ENCODE measurements at regions of chr12 and their contacts with region 1.

Region 1: GRCh38 chr12:42589465-42590329 is at the start of gene PRICKLE1:
- DNase-seq: peak; percentile 67
- H3K4me3 ChIP-seq: peak within 1 kb of the TSS; percentile 87 to 94 (median 90)
- H3K27ac ChIP-seq: peak within 1 kb of the TSS; percentile 68 to 84 (median 77)
- H3K4me1 ChIP-seq: peaks cover 0 to 45% (median 41%) of the 10 kb centered on the region in 4 donors
- H3K27me3 ChIP-seq: no peaks in the 10 kb centered on the region
- CTCF ChIP-seq: no peak
- EP300 ChIP-seq: no peak
- POLR2A ChIP-seq: no peak
- total RNA-seq, gene PRICKLE1: 4.6 to 12.4 (median 10.0) TPM

Region 2: DNA sequence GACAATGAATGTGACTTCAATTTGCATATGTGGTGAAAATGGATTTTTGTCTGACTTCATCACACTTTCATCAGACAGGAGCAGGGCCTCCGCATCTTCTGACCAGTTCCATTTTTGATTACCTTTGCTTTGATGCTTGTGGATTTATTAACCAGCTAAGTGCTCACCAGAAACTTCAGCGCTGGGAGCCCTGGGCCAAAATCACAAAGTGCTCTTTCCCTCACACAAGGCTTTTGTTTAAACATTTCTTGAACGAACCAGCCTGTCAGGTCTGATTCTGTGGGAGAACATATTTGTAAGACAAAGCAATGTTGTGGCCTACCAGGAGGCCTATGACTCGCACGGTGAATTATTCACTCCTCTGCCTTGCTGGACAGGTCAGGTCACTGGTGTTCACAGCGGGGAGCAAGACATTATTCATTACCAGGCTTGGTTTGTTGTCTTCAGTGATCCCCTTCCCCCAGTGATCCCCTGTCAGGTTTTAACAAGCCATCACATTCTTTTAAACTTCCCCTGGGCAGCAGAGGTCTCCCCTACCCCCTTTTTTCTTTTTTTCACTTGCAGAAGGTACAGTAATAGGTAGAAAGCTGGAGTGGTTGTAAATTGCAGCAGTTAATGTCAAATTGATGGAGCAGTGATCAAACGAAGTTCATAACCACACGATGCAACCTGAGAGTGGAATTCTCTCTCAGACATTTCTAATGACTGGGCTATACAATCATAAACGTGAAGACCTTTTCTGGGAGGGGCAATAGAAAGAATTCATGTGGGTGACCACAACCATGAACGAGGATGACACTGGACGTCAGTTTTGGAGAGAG is 167.4 kb after region 1 on chr12:
- intact Hi-C with region 1: no loop called
- DNase-seq: no peak
- H3K4me3 ChIP-seq: no peak overlapping the region
- H3K27ac ChIP-seq: peak overlapping the region in 1 of 4 donors; percentile 17
- H3K4me1 ChIP-seq: peaks cover 0 to 26% (median 20%) of the 10 kb centered on the region in 4 donors
- H3K27me3 ChIP-seq: no peaks in the 10 kb centered on the region
- CTCF ChIP-seq: no peak
- EP300 ChIP-seq: no peak
- POLR2A ChIP-seq: no peak

Region 3: GRCh38 chr12:43282106-43282505 is 692.4 kb after region 1 on chr12:
- intact Hi-C with region 1: loop called (anchors 5 kb)
- DNase-seq: no peak
- H3K4me3 ChIP-seq: no peak overlapping the region
- H3K27ac ChIP-seq: no peak overlapping the region
- H3K4me1 ChIP-seq: no peaks in the 10 kb centered on the region
- H3K27me3 ChIP-seq: no peaks in the 10 kb centered on the region
- CTCF ChIP-seq: peak in 1 of 4 experiments; percentile 17
- EP300 ChIP-seq: no peak
- POLR2A ChIP-seq: no peak

Region 4: GRCh38 chr12:43338848-43339526 is 749.3 kb after region 1 on chr12:
- intact Hi-C with region 1: loop called (anchors 5 kb)
- DNase-seq: no peak
- H3K4me3 ChIP-seq: no peak overlapping the region
- H3K27ac ChIP-seq: peak overlapping the region in 3 of 4 donors; percentile 49 to 71 (median 50)
- H3K4me1 ChIP-seq: peaks cover 0 to 14% (median 6%) of the 10 kb centered on the region in 4 donors
- H3K27me3 ChIP-seq: no peaks in the 10 kb centered on the region
- CTCF ChIP-seq: peak in 2 of 4 experiments; percentile 48 to 49
- EP300 ChIP-seq: no peak
- POLR2A ChIP-seq: no peak

Region 5: GRCh38 chr12:43758728-43759563 is 1169.2 kb after region 1 on chr12 and contains the starts of genes IRAK4 and PUS7L:
- intact Hi-C with region 1: loop called (anchors 5 kb)
- DNase-seq: peak; percentile 98
- H3K4me3 ChIP-seq: peak within 1 kb of the TSS; percentile 51 to 77 (median 70)
- H3K27ac ChIP-seq: peak within 1 kb of the TSS; percentile 81 to 90 (median 82)
- H3K4me1 ChIP-seq: peaks cover 0 to 30% (median 20%) of the 10 kb centered on the region in 4 donors
- H3K27me3 ChIP-seq: no peaks in the 10 kb centered on the region
- CTCF ChIP-seq: peak in 3 of 4 experiments; percentile 14 to 48 (median 23)
- EP300 ChIP-seq: peak in 1 of 4 donors; percentile 16
- POLR2A ChIP-seq: peak; percentile 55 to 65
- total RNA-seq, gene IRAK4: 24.5 to 34.3 (median 26.5) TPM
- total RNA-seq, gene PUS7L: 6.3 to 17.1 (median 8.9) TPM

Measured in sigmoid colon (tissue), 7 donors.